ENCODE measurements at regions of chr7 and their contacts with region 1.

Region 1: DNA sequence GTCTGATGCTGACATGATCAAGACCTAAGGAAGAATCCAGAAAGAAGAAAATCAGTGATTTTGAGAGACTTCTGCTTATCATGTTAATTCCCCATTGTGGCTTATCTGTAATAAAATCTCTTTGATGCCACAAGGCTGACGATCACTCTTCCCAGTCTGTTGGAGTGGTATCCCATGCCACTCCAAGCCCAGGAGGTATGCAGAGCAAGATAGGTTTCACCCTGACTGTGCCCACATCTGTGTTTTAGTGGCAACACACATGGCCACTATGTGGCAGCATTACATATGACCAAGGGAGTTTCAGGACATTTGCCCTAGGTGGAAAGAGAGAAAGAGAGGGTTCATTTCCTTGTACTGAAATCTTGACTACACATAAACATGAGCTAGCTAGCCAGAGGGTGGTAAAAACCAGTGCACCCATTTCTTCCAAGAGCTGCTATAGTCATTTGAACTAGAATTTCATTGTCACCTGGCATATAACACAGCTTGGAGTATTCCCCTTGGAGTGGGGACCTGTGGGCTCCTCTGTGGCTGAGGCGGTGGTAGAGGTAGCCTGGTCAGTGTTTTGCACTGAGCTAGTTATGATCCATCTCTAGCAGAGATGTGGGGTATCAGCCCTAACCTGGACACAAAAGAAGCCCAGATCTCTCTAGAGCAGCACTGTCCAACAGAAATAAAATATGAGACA is 20.8 kb downstream of the LAMB4 start:
- H3K4me3 Mint-ChIP-seq: no peak overlapping the region
- H3K27ac Mint-ChIP-seq: no peak overlapping the region
- H3K4me1 Mint-ChIP-seq: no peaks in the 10 kb centered on the region
- H3K27me3 Mint-ChIP-seq: no peaks in the 10 kb centered on the region

Region 2: DNA sequence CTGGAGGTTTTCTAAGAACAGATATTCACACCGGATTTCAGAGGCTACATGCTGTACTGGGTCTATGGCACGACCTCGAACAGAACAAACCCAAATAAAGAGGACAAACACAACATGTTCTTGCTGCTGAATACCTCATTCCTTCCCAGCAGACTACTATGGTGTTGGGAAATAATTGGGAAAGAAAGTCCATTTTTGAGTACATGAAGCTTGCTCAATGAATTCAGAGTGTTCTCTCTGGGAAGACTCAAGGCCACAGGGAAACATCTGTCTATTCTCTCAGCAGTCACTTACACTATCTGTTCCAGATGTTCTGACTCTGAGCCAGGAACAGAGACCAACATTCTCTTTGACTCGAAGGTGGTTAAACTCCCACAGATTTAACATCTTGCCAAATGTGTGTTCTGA is 137.3 kb before region 1 on chr7:
- intact Hi-C with region 1: no loop called
- H3K4me3 Mint-ChIP-seq: no peak overlapping the region
- H3K27ac Mint-ChIP-seq: no peak overlapping the region
- H3K4me1 Mint-ChIP-seq: peaks cover 8% of the 10 kb centered on the region
- H3K27me3 Mint-ChIP-seq: peaks cover 4% of the 10 kb centered on the region

Region 3: DNA sequence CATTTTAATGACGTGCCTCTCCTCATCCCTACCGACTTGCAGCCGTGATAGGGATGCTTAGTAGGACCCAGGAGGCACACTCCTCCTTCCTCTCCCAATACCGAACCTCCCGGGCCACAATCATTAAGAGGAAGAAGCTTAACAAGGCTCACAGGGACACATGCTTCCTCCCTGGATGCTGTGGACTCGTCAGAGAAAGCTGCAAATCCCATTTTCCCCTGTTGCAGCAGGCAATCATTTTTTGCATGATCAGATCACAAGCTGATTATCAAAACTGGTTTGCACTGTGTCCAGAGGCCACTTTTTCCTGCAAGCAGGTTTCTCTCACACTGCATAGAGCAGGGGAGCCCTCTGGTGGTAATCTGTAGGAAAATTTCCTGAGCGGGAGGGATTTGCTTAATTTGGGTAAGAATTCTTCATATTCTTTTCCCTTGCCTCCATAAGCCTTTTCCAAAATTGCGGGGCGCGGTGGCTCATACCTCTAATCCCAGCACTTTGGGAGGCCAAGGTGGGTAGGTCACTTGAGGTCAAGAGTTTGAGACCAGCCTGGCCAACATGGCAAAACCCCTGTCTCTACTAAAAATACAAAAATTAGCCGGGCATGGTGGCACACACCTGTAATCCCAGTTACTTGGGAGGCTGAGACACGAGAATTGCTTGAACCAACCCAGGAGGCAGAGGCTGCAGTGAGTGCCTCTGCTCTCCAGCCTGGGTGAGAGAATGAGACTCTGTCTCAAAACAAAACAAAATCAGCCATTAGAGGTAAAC is 36.9 kb after region 1 on chr7:
- intact Hi-C with region 1: loop called (anchors 2 kb)
- H3K4me3 Mint-ChIP-seq: no peak overlapping the region
- H3K27ac Mint-ChIP-seq: no peak overlapping the region
- H3K4me1 Mint-ChIP-seq: no peaks in the 10 kb centered on the region
- H3K27me3 Mint-ChIP-seq: peaks cover 6% of the 10 kb centered on the region